Activated naive CD4-positive, alpha-beta T cell treated with anti-CD3 and anti-CD28 coated beads for 36 hours (primary cell): ENCODE measurements at regions of chr16 and their contacts with region 1.

Region 1: GRCh38 chr16:28924732-28925385 is at the start of gene RABEP2:
- DNase-seq: peak; percentile 97
- H3K4me3 Mint-ChIP-seq: peak within 1 kb of the TSS; percentile 97
- H3K27ac Mint-ChIP-seq: peak within 1 kb of the TSS; percentile 99
- H3K4me1 Mint-ChIP-seq: peaks cover 18% of the 10 kb centered on the region
- H3K27me3 Mint-ChIP-seq: no peaks in the 10 kb centered on the region
- total RNA-seq, gene RABEP2: 11.6 to 14.0 TPM

Region 2: DNA sequence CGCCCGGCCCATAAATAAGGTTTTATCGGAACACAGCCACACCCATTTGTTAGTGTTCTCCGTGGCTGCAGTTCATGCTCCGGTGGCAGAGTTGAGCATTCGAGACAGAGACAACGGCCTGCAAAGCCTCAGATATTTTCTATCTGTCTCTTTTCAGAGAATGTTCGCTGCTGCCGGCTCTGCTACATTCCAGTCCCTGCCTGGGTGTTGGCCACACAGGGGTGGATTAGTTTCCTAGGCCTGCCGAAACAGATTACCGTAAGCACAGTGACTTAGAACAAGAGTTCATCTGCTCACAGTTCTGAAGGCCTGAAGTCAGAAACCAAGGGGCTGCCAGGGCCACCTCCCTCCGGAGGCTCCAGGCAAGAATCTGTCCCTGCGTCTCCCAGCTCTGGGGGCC is 842.2 kb before region 1 on chr16:
- CTCF ChIA-PET with region 1: no interaction called
- intact Hi-C with region 1: no loop called
- DNase-seq: no peak
- H3K4me3 Mint-ChIP-seq: no peak overlapping the region
- H3K27ac Mint-ChIP-seq: no peak overlapping the region
- H3K4me1 Mint-ChIP-seq: no peaks in the 10 kb centered on the region
- H3K27me3 Mint-ChIP-seq: no peaks in the 10 kb centered on the region

Region 3: DNA sequence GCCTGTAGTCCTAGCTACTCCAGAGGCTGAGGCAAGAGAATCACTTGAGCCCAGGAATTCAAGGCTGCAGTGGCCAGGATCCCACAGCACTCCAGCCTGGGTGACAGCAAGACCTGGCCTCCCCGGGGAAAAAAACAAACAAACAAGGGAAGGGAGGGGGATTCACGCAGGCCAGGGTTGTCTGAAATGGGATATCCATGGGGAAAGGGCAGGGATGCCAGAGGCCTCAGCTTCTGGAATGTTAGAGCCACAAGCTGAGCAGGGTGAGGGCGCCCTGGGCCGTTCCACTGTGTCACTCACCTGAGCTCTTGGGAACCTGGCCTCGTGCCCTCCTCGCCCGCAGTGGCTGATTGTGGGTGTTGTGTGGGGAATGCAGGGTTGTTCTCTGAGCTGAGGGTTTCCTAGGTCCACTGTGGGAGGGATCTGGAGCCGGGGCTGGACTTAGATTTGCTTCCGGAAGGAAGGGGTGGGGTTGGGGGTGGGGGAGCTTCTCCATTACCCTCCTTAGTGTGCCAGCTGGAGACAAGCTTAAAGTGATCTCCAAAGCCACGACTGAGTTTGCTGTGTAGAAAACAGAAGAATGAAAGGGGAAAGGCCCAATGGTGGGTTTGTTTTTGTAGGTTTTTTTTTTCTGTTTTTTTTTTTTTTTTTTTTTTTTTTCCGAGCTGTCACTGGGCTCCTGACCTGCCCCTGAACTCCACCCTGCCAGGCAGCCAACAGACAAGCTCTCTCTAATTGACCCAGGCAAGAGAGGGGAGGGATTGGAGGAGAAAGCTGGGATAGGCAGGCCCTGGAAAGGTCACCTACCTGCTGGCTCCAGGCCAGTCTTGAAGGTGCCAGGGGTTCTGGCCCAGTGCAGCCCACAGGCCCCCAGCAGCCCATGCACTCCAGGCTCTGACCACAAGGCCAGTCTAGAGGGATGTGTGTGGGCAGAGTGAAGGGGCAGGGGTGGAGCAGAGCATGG is 314.9 kb before region 1 on chr16 and contains the start of gene SULT1A1:
- CTCF ChIA-PET with region 1: no interaction called
- intact Hi-C with region 1: no loop called
- DNase-seq: no peak
- H3K4me3 Mint-ChIP-seq: no peak within 1 kb of the TSS
- H3K27ac Mint-ChIP-seq: no peak within 1 kb of the TSS
- H3K4me1 Mint-ChIP-seq: peaks cover 14% of the 10 kb centered on the region
- H3K27me3 Mint-ChIP-seq: no peaks in the 10 kb centered on the region
- total RNA-seq, gene SULT1A1: 9.7 to 10.8 TPM

Region 4: DNA sequence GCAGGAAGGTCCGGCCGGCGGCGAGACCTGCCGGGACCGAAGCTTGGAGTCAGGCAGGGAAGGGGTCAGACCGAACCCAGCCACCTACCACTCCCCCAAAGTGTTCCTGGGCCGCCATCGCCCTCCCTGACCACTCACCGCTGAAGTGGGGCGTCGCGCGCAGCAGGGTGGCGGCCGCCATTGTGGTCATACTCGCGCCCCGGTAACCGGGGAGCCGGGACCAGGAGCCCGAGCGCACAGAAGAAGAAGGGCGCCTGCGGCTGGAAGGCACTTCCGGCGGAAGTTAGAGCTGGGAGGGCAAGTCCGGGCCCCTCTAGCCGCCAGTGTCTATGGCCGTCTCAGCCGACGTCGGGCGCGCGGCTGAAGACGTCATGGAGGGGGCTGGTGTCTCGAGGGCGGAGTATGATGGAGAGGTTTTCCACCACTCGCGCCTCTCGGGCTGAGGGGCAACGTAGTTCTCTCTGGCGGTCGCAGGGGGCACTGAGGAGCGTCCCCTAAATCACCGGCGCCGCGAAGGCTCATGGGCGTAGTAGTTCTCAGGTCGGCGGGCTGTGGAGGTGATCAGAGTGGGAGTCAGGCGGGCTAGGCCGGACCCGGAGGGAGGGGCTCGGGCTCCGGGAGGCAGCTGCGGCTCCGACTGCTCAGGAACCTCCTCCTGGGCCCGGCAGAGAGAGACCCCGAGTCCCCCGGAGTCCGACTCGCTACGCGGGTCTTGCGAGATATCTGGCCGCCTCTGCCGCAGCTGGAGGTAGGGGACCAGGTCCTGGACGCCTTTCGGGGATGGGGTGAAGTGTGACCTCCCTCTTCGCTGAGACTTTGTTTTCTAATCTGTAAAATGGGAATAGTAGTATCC is 78.6 kb before region 1 on chr16 and contains the start of gene TUFM:
- CTCF ChIA-PET with region 1: no interaction called
- intact Hi-C with region 1: loop called (anchors 1 kb)
- DNase-seq: peak; percentile 98
- H3K4me3 Mint-ChIP-seq: peak within 1 kb of the TSS; percentile 98
- H3K27ac Mint-ChIP-seq: peak within 1 kb of the TSS; percentile 96
- H3K4me1 Mint-ChIP-seq: peaks cover 28% of the 10 kb centered on the region
- H3K27me3 Mint-ChIP-seq: no peaks in the 10 kb centered on the region
- total RNA-seq, gene TUFM: 276 to 289 TPM

Region 5: GRCh38 chr16:28863929-28864793 is 60.7 kb before region 1 on chr16:
- CTCF ChIA-PET with region 1: no interaction called
- intact Hi-C with region 1: loop called (anchors 1 kb)
- DNase-seq: peak; percentile 21
- H3K4me3 Mint-ChIP-seq: peak overlapping the region; percentile 95
- H3K27ac Mint-ChIP-seq: peak overlapping the region; percentile 96
- H3K4me1 Mint-ChIP-seq: peaks cover 17% of the 10 kb centered on the region
- H3K27me3 Mint-ChIP-seq: no peaks in the 10 kb centered on the region

Region 6: GRCh38 chr16:28879841-28880588 is 44.8 kb before region 1 on chr16:
- CTCF ChIA-PET with region 1: no interaction called
- intact Hi-C with region 1: loop called (anchors 2 kb)
- DNase-seq: peak; percentile 95
- H3K4me3 Mint-ChIP-seq: peak overlapping the region; percentile 90
- H3K27ac Mint-ChIP-seq: peak overlapping the region; percentile 24
- H3K4me1 Mint-ChIP-seq: peaks cover 20% of the 10 kb centered on the region
- H3K27me3 Mint-ChIP-seq: peaks cover 13% of the 10 kb centered on the region

Region 7: GRCh38 chr16:28935924-28936783 is 11.3 kb after region 1 on chr16:
- CTCF ChIA-PET with region 1: no interaction called
- intact Hi-C with region 1: loop called (anchors 1 kb)
- DNase-seq: peak; percentile 85
- H3K4me3 Mint-ChIP-seq: peak overlapping the region; percentile 66
- H3K27ac Mint-ChIP-seq: peak overlapping the region; percentile 52
- H3K4me1 Mint-ChIP-seq: peaks cover 16% of the 10 kb centered on the region
- H3K27me3 Mint-ChIP-seq: no peaks in the 10 kb centered on the region

Region 8: DNA sequence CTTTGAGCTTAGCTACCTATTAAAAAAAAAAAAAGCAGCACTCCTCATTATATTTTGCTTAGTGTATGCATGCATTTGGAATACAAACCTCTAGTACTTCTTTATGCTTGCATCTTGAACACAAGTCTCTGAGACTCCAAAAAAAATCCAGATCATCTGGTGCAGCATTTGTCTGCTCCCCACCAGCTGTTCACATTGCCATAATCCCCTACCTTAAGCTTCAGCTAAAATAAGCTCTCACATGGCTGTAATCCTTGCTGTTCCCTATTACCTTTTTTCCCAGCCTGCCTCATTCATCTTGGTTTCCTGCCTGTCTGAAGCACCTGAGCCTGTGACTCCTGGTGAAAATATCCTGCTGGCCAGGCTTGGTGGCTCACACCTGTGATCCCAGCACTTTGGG is 18.4 kb after region 1 on chr16:
- CTCF ChIA-PET with region 1: interaction called, 26 read pairs
- intact Hi-C with region 1: loop called (anchors 1 kb)
- DNase-seq: no peak
- H3K4me3 Mint-ChIP-seq: no peak overlapping the region
- H3K27ac Mint-ChIP-seq: no peak overlapping the region
- H3K4me1 Mint-ChIP-seq: peaks cover 7% of the 10 kb centered on the region
- H3K27me3 Mint-ChIP-seq: no peaks in the 10 kb centered on the region